Psoas muscle (tissue), 8 donors: ENCODE measurements at regions of chr1 and their contacts with region 1.

Region 1: DNA sequence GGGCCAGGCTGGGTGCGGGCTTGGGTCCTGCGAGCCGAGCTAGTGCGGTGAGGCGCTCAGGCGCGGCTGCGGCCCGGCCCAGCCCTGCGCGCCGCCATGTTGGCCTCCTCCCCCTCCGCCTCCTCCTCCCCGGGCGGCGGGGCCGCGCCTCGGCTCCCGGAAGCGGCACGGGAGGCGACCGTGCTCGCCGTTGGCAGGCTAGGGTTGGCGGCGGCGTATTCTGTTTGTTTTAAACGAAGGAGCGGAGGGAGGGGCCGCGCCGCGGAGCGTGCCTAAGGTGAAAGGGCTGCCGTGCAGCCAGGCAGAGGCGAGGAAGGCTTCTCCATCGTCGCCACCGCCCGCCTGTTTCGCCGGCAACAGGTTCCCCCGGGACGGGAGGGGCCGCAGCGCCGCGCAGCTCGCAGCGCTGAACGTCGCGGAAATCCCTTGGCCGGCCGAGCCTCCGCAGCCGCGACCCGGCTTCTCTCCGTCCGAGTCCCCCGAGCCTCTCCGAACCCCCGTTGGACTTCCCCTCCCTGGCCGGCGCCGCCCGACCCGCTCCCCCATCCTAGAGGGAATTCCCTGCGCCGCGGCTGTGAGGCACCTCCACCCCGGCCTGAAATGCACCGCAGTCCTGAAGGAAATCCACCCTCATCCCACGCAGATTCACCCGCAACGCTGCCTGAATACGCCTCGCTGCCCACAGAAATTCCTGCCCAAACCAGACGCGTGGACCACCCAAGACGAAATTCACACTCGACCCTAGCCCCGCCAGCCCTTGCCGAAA is at the start of gene USP24:
- DNase-seq: peak; percentile 81 to 90
- ATAC-seq: peak; percentile 90 to 91 (median 90)
- H3K4me3 ChIP-seq: peak within 1 kb of the TSS; percentile 92
- H3K27ac ChIP-seq: peak within 1 kb of the TSS; percentile 99
- H3K4me1 ChIP-seq: peaks cover 51% of the 10 kb centered on the region
- H3K27me3 ChIP-seq: no peaks in the 10 kb centered on the region
- CTCF ChIP-seq: no peak
- total RNA-seq, gene USP24: 48.7 to 67.9 (median 59.5) TPM

Region 2: DNA sequence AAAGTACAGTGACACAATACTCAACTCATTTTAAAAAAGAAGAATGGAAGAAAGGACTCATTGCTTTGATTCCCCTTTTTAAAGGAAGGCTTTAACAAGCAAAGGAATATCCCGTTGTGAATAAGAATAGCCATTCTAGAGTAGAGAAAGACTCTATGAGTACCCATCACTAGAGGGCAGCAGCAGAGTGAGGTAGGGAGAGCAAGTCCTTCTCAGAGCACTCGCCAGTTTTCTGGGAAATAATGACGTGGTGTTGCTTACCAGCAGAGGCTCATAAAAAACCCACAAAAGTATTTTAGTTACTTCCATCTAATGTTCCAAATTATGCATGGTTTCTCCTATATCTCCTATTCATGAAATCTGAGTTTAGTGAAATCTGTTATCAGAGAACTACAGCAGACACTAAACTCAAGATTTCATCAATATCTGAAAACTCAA is 74.9 kb before region 1 on chr1:
- intact Hi-C with region 1: loop called in 1 of 2 experiments (anchors 5 kb)
- DNase-seq: peak in 1 of 2 donors; percentile 33
- ATAC-seq: peak; percentile 91 to 97 (median 95)
- H3K4me3 ChIP-seq: no peak overlapping the region
- H3K27ac ChIP-seq: peak overlapping the region; percentile 53
- H3K4me1 ChIP-seq: peaks cover 6% of the 10 kb centered on the region
- H3K27me3 ChIP-seq: no peaks in the 10 kb centered on the region
- CTCF ChIP-seq: peak; percentile 87

Region 3: DNA sequence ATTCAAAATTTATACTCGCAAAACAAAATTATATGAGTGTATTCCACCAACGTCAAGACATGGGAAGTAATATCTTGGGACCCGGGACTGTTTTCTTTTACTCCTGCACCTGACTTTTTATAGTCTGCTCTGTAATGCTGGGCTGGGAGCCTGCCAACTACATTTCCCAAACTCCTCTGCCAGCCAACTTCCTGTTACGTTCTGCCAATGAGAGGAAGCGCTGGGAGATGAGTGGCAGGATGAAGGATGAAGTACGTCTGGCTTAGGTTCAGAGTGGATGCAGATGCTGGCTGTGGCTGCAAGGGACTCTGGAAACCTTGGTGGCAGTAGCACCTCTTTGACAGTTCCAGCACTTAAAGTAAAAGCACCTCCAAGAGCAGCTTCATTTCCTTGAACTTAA is 59.9 kb before region 1 on chr1:
- intact Hi-C with region 1: loop called in 1 of 2 experiments (anchors 10 kb)
- DNase-seq: peak; percentile 61 to 80
- ATAC-seq: peak; percentile 80 to 95 (median 90)
- H3K4me3 ChIP-seq: no peak overlapping the region
- H3K27ac ChIP-seq: peak overlapping the region; percentile 50
- H3K4me1 ChIP-seq: peaks cover 16% of the 10 kb centered on the region
- H3K27me3 ChIP-seq: no peaks in the 10 kb centered on the region
- CTCF ChIP-seq: no peak

Region 4: GRCh38 chr1:55172272-55172671 is 43.2 kb before region 1 on chr1:
- intact Hi-C with region 1: loop called in 1 of 2 experiments (anchors 5 kb)
- DNase-seq: no peak
- ATAC-seq: peak; percentile 40 to 78 (median 64)
- H3K4me3 ChIP-seq: no peak overlapping the region
- H3K27ac ChIP-seq: peak overlapping the region; percentile 58
- H3K4me1 ChIP-seq: peaks cover 44% of the 10 kb centered on the region
- H3K27me3 ChIP-seq: no peaks in the 10 kb centered on the region
- CTCF ChIP-seq: no peak

Region 5: GRCh38 chr1:55277377-55278130 is 62.1 kb after region 1 on chr1:
- intact Hi-C with region 1: loop called (anchors 5 to 10 kb)
- DNase-seq: peak; percentile 79 to 89
- ATAC-seq: peak; percentile 87 to 93 (median 90)
- H3K4me3 ChIP-seq: no peak overlapping the region
- H3K27ac ChIP-seq: peak overlapping the region; percentile 71
- H3K4me1 ChIP-seq: peaks cover 21% of the 10 kb centered on the region
- H3K27me3 ChIP-seq: no peaks in the 10 kb centered on the region
- CTCF ChIP-seq: peak; percentile 94